ENCODE measurements at regions of chr9 and their contacts with region 1.

Region 1: GRCh38 chr9:105259731-105260612 is 15.5 kb downstream of the SLC44A1 start:
- DNase-seq: no peak
- ATAC-seq: peak in 4 of 8 donors; percentile 21 to 83 (median 45)
- H3K4me3 ChIP-seq: no peak overlapping the region
- H3K27ac ChIP-seq: peak overlapping the region in 1 of 10 donors; percentile 23
- H3K4me1 ChIP-seq: peaks cover 4 to 45% (median 30%) of the 10 kb centered on the region in 9 donors
- H3K27me3 ChIP-seq: no peaks in the 10 kb centered on the region
- CTCF ChIP-seq: no peak

Region 2: GRCh38 chr9:105290398-105290797 is 30.4 kb after region 1 on chr9:
- intact Hi-C with region 1: loop called in 1 of 10 experiments (anchors 2 kb)
- DNase-seq: no peak
- ATAC-seq: no peak
- H3K4me3 ChIP-seq: no peak overlapping the region
- H3K27ac ChIP-seq: no peak overlapping the region
- H3K4me1 ChIP-seq: peaks cover 0 to 33% (median 10%) of the 10 kb centered on the region in 9 donors
- H3K27me3 ChIP-seq: no peaks in the 10 kb centered on the region
- CTCF ChIP-seq: no peak